ENCODE measurements at regions of chr16 and their contacts with region 1.

Region 1: GRCh38 chr16:23842137-23842600 is 6.4 kb downstream of the PRKCB start:
- DNase-seq: peak; percentile 96
- ATAC-seq: peak; percentile 76
- H3K4me3 ChIP-seq: peak overlapping the region; percentile 58; the same call in 1 of the 2 replicates
- H3K27ac ChIP-seq: peak overlapping the region; percentile 80
- H3K4me1 ChIP-seq: peaks cover 40% of the 10 kb centered on the region
- H3K27me3 ChIP-seq: no peaks in the 10 kb centered on the region
- CTCF ChIP-seq: no peak
- EP300 ChIP-seq: peak; percentile 82 to 95
- POLR2A ChIP-seq: no peak
- RAD21 ChIP-seq: 0 out of 2 replicates have a peak, but pooled peaks have one; percentile 21

Region 2: GRCh38 chr16:23296994-23297393 is 545.2 kb before region 1 on chr16:
- CTCF ChIA-PET with region 1: no interaction called
- POLR2A ChIA-PET with region 1: no interaction called
- RAD21 ChIA-PET with region 1: no interaction called
- SMC1A ChIA-PET with region 1: no interaction called
- in situ Hi-C with region 1: no loop called
- intact Hi-C with region 1: no loop called
- DNase-seq: no peak
- ATAC-seq: peak; percentile 77
- H3K4me3 ChIP-seq: no peak overlapping the region
- H3K27ac ChIP-seq: no peak overlapping the region
- H3K4me1 ChIP-seq: peaks cover 7% of the 10 kb centered on the region; the same call in 1 of the 2 replicates
- H3K27me3 ChIP-seq: peaks cover 0 to 3% of the 10 kb centered on the region in 2 experiments; a peak in 2 of 4 replicates
- CTCF ChIP-seq: peak; percentile 32 to 48 (median 37); a peak in 4 of 6 replicates
- EP300 ChIP-seq: no peak
- POLR2A ChIP-seq: no peak
- RAD21 ChIP-seq: peak; percentile 63

Region 3: GRCh38 chr16:23504451-23505179 is 337.6 kb before region 1 on chr16:
- CTCF ChIA-PET with region 1: no interaction called
- POLR2A ChIA-PET with region 1: no interaction called
- RAD21 ChIA-PET with region 1: no interaction called
- SMC1A ChIA-PET with region 1: no interaction called
- in situ Hi-C with region 1: loop called (anchors 10 kb)
- intact Hi-C with region 1: no loop called
- DNase-seq: peak; percentile 77
- ATAC-seq: peak; percentile 76
- H3K4me3 ChIP-seq: peak overlapping the region; percentile 68
- H3K27ac ChIP-seq: peak overlapping the region; percentile 86
- H3K4me1 ChIP-seq: peaks cover 48% of the 10 kb centered on the region
- H3K27me3 ChIP-seq: no peaks in the 10 kb centered on the region
- CTCF ChIP-seq: 0 out of 6 replicates have a peak, but pooled peaks of 1 of the 3 experiments have one; percentile 23
- EP300 ChIP-seq: peak; percentile 73 to 86; a peak in 3 of 4 replicates
- POLR2A ChIP-seq: peak; percentile 31; the same call in 1 of the 2 replicates
- RAD21 ChIP-seq: no peak

Region 4: DNA sequence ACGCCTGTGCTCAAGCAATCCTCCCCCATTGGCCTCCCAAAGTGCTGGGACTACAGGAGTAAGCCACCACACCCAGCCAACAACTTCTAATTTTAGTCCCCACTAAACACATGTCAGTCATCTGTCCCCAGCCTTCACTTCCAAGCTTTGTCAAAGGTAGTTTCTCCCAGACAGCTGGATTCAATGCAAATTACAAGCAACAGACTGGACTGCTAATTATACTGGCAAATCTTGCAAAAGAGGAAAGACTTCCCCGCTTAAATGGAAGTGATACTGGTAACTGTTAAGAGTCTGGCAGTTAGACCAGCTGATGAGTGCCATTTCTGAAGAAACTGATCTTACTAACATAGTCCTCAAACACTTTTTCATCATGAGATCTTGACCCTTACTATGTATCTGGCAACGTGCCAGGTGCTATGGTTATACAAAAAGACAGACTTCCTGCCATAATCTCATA is 323.7 kb before region 1 on chr16:
- CTCF ChIA-PET with region 1: no interaction called
- POLR2A ChIA-PET with region 1: no interaction called
- RAD21 ChIA-PET with region 1: no interaction called
- SMC1A ChIA-PET with region 1: no interaction called
- in situ Hi-C with region 1: no loop called
- intact Hi-C with region 1: no loop called
- DNase-seq: no peak
- ATAC-seq: peak; percentile 77
- H3K4me3 ChIP-seq: no peak overlapping the region
- H3K27ac ChIP-seq: peak overlapping the region; percentile 71
- H3K4me1 ChIP-seq: peaks cover 33% of the 10 kb centered on the region
- H3K27me3 ChIP-seq: no peaks in the 10 kb centered on the region
- CTCF ChIP-seq: no peak
- EP300 ChIP-seq: no peak
- POLR2A ChIP-seq: no peak
- RAD21 ChIP-seq: no peak

Region 5: DNA sequence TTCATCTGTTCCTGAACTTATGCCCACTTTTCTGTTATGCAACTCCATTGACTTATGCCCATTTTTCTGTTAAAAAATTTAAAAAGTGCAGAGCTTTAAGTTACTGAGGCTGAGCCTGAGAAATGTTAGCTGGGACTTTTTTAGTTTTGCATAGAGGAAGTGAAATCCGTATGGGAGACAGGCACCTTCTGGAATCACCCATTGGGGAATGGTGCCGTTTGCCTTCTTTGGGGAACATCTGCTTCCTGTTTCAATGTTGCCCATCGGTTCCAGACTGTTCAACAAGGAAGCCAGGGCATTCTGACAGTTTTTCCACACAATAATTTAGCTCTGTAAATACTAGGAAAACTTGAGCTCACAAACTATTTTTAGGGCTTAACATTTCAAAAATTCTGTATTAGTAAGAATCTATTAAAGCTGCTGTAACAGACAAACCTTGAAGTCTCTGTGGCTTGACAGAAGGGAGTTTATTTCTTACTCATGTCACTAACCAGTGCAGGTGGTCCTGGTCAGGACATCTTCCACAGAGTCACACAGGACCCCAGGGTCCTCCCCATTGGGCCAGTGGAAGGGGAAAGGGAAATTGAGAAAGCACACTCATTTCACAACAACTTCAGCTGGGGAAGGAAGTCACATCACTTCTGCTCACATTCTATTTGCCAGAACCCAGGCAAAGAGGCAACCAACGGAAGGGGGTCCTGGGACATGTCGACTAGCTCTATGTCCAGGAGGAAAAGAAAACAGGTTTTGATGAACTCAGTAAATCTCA is 10.8 kb after region 1 on chr16:
- CTCF ChIA-PET with region 1: interaction called, 134 read pairs
- POLR2A ChIA-PET with region 1: interaction called, 18 read pairs
- RAD21 ChIA-PET with region 1: interaction called, 177 read pairs
- SMC1A ChIA-PET with region 1: interaction called, 466 read pairs
- in situ Hi-C with region 1: no loop called
- intact Hi-C with region 1: loop called (anchors 2 kb)
- DNase-seq: no peak
- ATAC-seq: peak; percentile 15
- H3K4me3 ChIP-seq: peak overlapping the region; percentile 30; the same call in 1 of the 2 replicates
- H3K27ac ChIP-seq: peak overlapping the region; percentile 87
- H3K4me1 ChIP-seq: peaks cover 71% of the 10 kb centered on the region
- H3K27me3 ChIP-seq: no peaks in the 10 kb centered on the region
- CTCF ChIP-seq: no peak
- EP300 ChIP-seq: no peak
- POLR2A ChIP-seq: no peak
- RAD21 ChIP-seq: 0 out of 2 replicates have a peak, but pooled peaks have one; percentile 17

Region 6: GRCh38 chr16:23863511-23864422 is 21.6 kb after region 1 on chr16:
- CTCF ChIA-PET with region 1: interaction called, 134 read pairs
- POLR2A ChIA-PET with region 1: interaction called, 79 read pairs
- RAD21 ChIA-PET with region 1: interaction called, 177 read pairs
- SMC1A ChIA-PET with region 1: interaction called, 466 read pairs
- in situ Hi-C with region 1: no loop called
- intact Hi-C with region 1: loop called (anchors 1 kb)
- DNase-seq: no peak
- ATAC-seq: peak; percentile 85
- H3K4me3 ChIP-seq: peak overlapping the region; percentile 55
- H3K27ac ChIP-seq: peak overlapping the region; percentile 98
- H3K4me1 ChIP-seq: peaks cover 62% of the 10 kb centered on the region
- H3K27me3 ChIP-seq: no peaks in the 10 kb centered on the region
- CTCF ChIP-seq: no peak
- EP300 ChIP-seq: peak; percentile 85 to 95
- POLR2A ChIP-seq: 0 out of 2 replicates have a peak, but pooled peaks have one; percentile 22
- RAD21 ChIP-seq: no peak

Region 7: GRCh38 chr16:23924128-23924527 is 82.0 kb after region 1 on chr16:
- CTCF ChIA-PET with region 1: interaction called, 3 read pairs
- POLR2A ChIA-PET with region 1: no interaction called
- RAD21 ChIA-PET with region 1: interaction called, 4 read pairs
- SMC1A ChIA-PET with region 1: interaction called, 11 read pairs
- in situ Hi-C with region 1: no loop called
- intact Hi-C with region 1: loop called (anchors 2 kb)
- DNase-seq: peak; percentile 42
- ATAC-seq: peak; percentile 87
- H3K4me3 ChIP-seq: no peak overlapping the region
- H3K27ac ChIP-seq: peak overlapping the region; percentile 66
- H3K4me1 ChIP-seq: peaks cover 21% of the 10 kb centered on the region
- H3K27me3 ChIP-seq: no peaks in the 10 kb centered on the region
- CTCF ChIP-seq: no peak
- EP300 ChIP-seq: peak in 1 of 2 experiments; percentile 18; a peak in 1 of 4 replicates
- POLR2A ChIP-seq: no peak
- RAD21 ChIP-seq: no peak

Measured in GM12878 (cell line).